Activated naive CD4-positive, alpha-beta T cell treated with anti-CD3 and anti-CD28 coated beads for 36 hours (primary cell): ENCODE measurements at regions of chr3 and their contacts with region 1.

Region 1: DNA sequence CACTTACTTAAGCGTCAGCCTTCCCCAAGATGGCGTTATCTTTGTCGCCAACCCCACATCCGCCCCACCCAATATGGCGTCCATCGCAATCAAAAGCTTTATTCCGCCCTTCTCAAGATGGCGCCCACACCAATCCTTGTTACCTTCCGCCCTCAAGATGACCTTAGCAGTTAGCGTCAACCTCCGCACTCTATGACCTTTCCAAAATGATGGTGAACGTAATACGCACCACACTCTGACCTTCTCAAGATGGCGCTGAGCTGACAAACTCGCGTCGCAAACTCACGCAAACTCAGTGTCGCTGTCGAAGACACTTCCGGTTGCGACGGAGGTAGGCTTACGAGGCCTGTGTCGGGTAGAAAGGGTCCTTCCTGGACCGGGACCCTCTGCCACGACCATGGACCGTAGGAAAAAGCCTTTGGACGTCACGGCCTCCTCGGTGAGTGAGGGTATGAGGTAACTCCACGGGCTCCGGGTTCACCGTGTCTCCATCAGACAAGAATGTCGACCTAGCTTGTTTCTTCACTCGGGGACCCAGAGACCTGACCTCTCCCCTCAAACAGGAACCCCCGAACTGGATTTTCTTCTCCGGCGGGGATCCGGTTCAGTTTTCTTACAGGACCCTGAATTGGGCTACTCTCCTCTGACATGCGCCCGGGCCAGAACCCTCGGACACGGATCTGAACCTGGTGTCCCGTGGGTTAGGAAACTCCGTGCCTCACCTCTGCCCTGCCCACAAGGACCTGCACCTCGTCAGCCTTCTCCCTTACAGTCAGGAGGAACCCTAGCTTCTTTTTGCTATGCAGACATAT is at the start of gene CCDC174:
- DNase-seq: peak; percentile 97
- H3K4me3 Mint-ChIP-seq: peak within 1 kb of the TSS; percentile 99
- H3K27ac Mint-ChIP-seq: peak within 1 kb of the TSS; percentile 98
- H3K4me1 Mint-ChIP-seq: peaks cover 38% of the 10 kb centered on the region
- H3K27me3 Mint-ChIP-seq: no peaks in the 10 kb centered on the region
- total RNA-seq, gene CCDC174: 16.1 to 20.7 TPM

Region 2: GRCh38 chr3:14124615-14125190 is 526.9 kb before region 1 on chr3 and contains the starts of genes CHCHD4 and TMEM43:
- CTCF ChIA-PET with region 1: no interaction called
- intact Hi-C with region 1: loop called (anchors 5 kb)
- DNase-seq: peak; percentile 99
- H3K4me3 Mint-ChIP-seq: peak within 1 kb of the TSS; percentile 93
- H3K27ac Mint-ChIP-seq: peak within 1 kb of the TSS; percentile 92
- H3K4me1 Mint-ChIP-seq: peaks cover 50% of the 10 kb centered on the region
- H3K27me3 Mint-ChIP-seq: no peaks in the 10 kb centered on the region
- total RNA-seq, gene CHCHD4: 16.2 to 17.9 TPM
- total RNA-seq, gene TMEM43: 18.3 to 19.8 TPM

Region 3: GRCh38 chr3:14431892-14432834 is 219.5 kb before region 1 on chr3:
- CTCF ChIA-PET with region 1: no interaction called
- intact Hi-C with region 1: loop called (anchors 1 kb)
- DNase-seq: peak; percentile 98
- H3K4me3 Mint-ChIP-seq: peak overlapping the region; percentile 66
- H3K27ac Mint-ChIP-seq: peak overlapping the region; percentile 94
- H3K4me1 Mint-ChIP-seq: peaks cover 76% of the 10 kb centered on the region
- H3K27me3 Mint-ChIP-seq: no peaks in the 10 kb centered on the region

Region 4: GRCh38 chr3:15064835-15065549 is 413.3 kb after region 1 on chr3 and contains the start of gene MRPS25:
- CTCF ChIA-PET with region 1: no interaction called
- intact Hi-C with region 1: loop called (anchors 1 kb)
- DNase-seq: peak; percentile 93
- H3K4me3 Mint-ChIP-seq: peak within 1 kb of the TSS; percentile 96
- H3K27ac Mint-ChIP-seq: peak within 1 kb of the TSS; percentile 87
- H3K4me1 Mint-ChIP-seq: peaks cover 25% of the 10 kb centered on the region
- H3K27me3 Mint-ChIP-seq: no peaks in the 10 kb centered on the region
- total RNA-seq, gene MRPS25: 55.0 to 57.5 TPM

Region 5: DNA sequence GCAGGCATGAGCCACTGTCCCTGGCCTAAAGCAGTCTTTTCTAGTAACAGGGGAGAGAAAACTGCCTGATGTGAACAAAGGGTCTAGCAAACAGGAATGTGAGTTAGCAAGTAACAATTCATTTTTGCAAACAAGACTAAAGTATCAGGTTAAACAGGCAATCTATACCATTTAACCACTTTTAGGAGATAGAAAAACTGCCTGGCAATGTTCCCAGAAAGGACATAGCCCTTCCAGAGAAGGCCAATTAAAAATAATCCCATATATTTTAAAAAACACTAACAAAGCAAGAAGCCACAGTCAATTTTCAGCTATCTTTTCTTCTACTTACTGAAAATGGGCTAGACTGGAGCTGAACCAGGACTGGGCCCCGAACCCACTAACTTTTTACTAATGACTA is 441.0 kb after region 1 on chr3:
- CTCF ChIA-PET with region 1: no interaction called
- intact Hi-C with region 1: no loop called
- DNase-seq: no peak
- H3K4me3 Mint-ChIP-seq: no peak overlapping the region
- H3K27ac Mint-ChIP-seq: no peak overlapping the region
- H3K4me1 Mint-ChIP-seq: peaks cover 3% of the 10 kb centered on the region
- H3K27me3 Mint-ChIP-seq: no peaks in the 10 kb centered on the region

Region 6: GRCh38 chr3:15427182-15427880 is 775.7 kb after region 1 on chr3 and contains the starts of genes EAF1 and METTL6:
- CTCF ChIA-PET with region 1: no interaction called
- intact Hi-C with region 1: loop called (anchors 5 kb)
- DNase-seq: peak; percentile 92
- H3K4me3 Mint-ChIP-seq: peak within 1 kb of the TSS; percentile 90
- H3K27ac Mint-ChIP-seq: peak within 1 kb of the TSS; percentile 91
- H3K4me1 Mint-ChIP-seq: peaks cover 41% of the 10 kb centered on the region
- H3K27me3 Mint-ChIP-seq: no peaks in the 10 kb centered on the region
- total RNA-seq, gene EAF1: 19.5 to 20.6 TPM
- total RNA-seq, gene METTL6: 12.5 to 14.0 TPM